Naive thymus-derived CD4-positive, alpha-beta T cell (primary cell): ENCODE measurements at regions of chr12 and their contacts with region 1.

Region 1: GRCh38 chr12:19739183-19739776 is 300.0 kb downstream of the AEBP2 start:
- DNase-seq: peak in 3 of 9 donors; percentile 1 to 16 (median 5)
- ATAC-seq: no peak
- H3K4me3 ChIP-seq: no peak overlapping the region
- H3K4me3 Mint-ChIP-seq: no peak overlapping the region
- H3K27ac ChIP-seq: no peak overlapping the region
- H3K27ac Mint-ChIP-seq: no peak overlapping the region
- H3K4me1 ChIP-seq: no peaks in the 10 kb centered on the region
- H3K4me1 Mint-ChIP-seq: no peaks in the 10 kb centered on the region
- H3K27me3 ChIP-seq: no peaks in the 10 kb centered on the region
- H3K27me3 Mint-ChIP-seq: peaks cover 0 to 10% (median 4%) of the 10 kb centered on the region in 5 donors

Region 2: DNA sequence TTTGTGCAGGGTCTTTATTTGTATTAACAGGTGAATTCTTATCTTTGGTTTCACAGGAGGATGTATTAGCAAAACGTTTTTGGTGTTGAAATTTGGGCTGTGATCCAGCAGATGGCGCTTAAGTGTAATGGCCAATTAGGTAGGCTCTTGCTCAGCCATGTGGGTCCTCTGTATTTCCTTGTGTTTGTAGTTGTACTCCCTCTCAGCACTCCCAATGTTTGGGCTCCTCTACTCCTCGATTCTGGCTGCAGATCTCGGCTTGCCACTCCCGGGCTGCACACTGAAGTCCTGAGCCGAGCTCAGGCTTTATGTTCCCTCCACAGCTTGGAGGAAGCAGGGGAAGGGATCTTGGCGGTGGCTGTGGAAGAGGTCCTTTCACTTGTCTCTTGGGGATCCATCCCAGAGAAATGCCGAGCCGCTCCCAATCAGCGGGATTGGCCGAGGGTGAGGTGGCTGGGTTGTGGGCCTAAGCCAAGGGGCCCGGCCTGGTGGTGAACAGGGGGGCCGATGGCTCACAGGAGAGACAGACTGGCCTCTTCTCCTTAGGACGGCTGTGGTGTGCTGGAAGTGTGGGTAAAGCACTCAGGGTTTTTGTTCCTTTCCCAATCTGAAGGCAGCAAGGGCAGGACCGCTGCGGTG is 166.2 kb before region 1 on chr12:
- CTCF ChIA-PET with region 1: no interaction called
- POLR2A ChIA-PET with region 1: no interaction called
- intact Hi-C with region 1: loop called in 1 of 2 experiments (anchors 2 kb)
- DNase-seq: peak in 2 of 9 donors; percentile 1 to 6
- ATAC-seq: no peak
- H3K4me3 ChIP-seq: no peak overlapping the region
- H3K4me3 Mint-ChIP-seq: no peak overlapping the region
- H3K27ac ChIP-seq: no peak overlapping the region
- H3K27ac Mint-ChIP-seq: no peak overlapping the region
- H3K4me1 ChIP-seq: no peaks in the 10 kb centered on the region
- H3K4me1 Mint-ChIP-seq: peaks cover 0 to 5% (median 0%) of the 10 kb centered on the region in 7 donors
- H3K27me3 ChIP-seq: no peaks in the 10 kb centered on the region
- H3K27me3 Mint-ChIP-seq: no peaks in the 10 kb centered on the region

Region 3: GRCh38 chr12:19707948-19708409 is 31.3 kb before region 1 on chr12:
- CTCF ChIA-PET with region 1: no interaction called
- POLR2A ChIA-PET with region 1: no interaction called
- intact Hi-C with region 1: no loop called
- DNase-seq: no peak
- ATAC-seq: no peak
- H3K4me3 ChIP-seq: no peak overlapping the region
- H3K4me3 Mint-ChIP-seq: no peak overlapping the region
- H3K27ac ChIP-seq: no peak overlapping the region
- H3K27ac Mint-ChIP-seq: no peak overlapping the region
- H3K4me1 ChIP-seq: no peaks in the 10 kb centered on the region
- H3K4me1 Mint-ChIP-seq: peaks cover 0 to 1% (median 0%) of the 10 kb centered on the region in 7 donors
- H3K27me3 ChIP-seq: no peaks in the 10 kb centered on the region
- H3K27me3 Mint-ChIP-seq: peaks cover 0 to 5% (median 0%) of the 10 kb centered on the region in 5 donors

Region 4: DNA sequence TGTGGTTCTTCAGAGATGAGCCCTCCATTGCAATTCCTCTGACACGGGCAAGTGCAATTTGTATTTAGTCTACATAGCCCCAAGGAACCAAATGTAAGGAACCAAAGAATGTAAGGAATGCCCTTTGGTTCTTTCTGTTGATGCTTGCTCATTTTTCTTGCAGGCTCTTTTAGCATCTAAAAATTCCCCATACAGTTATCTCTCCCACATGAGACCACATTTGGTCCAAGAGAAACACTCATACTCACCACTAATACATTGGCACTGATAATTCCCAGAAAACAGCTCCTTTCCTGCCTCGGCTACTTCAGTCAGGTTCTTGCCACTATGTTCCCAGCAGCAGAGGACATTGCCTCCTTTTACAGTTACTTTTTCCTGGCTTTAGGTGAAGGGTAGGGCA is 32.6 kb after region 1 on chr12:
- CTCF ChIA-PET with region 1: no interaction called
- POLR2A ChIA-PET with region 1: no interaction called
- intact Hi-C with region 1: no loop called
- DNase-seq: no peak
- ATAC-seq: no peak
- H3K4me3 ChIP-seq: no peak overlapping the region
- H3K4me3 Mint-ChIP-seq: no peak overlapping the region
- H3K27ac ChIP-seq: no peak overlapping the region
- H3K27ac Mint-ChIP-seq: no peak overlapping the region
- H3K4me1 ChIP-seq: no peaks in the 10 kb centered on the region
- H3K4me1 Mint-ChIP-seq: no peaks in the 10 kb centered on the region
- H3K27me3 ChIP-seq: no peaks in the 10 kb centered on the region
- H3K27me3 Mint-ChIP-seq: peaks cover 0 to 2% (median 0%) of the 10 kb centered on the region in 5 donors